Heart left ventricle (tissue), 16 donors: ENCODE measurements at regions of chr11 and their contacts with region 1.

Region 1: DNA sequence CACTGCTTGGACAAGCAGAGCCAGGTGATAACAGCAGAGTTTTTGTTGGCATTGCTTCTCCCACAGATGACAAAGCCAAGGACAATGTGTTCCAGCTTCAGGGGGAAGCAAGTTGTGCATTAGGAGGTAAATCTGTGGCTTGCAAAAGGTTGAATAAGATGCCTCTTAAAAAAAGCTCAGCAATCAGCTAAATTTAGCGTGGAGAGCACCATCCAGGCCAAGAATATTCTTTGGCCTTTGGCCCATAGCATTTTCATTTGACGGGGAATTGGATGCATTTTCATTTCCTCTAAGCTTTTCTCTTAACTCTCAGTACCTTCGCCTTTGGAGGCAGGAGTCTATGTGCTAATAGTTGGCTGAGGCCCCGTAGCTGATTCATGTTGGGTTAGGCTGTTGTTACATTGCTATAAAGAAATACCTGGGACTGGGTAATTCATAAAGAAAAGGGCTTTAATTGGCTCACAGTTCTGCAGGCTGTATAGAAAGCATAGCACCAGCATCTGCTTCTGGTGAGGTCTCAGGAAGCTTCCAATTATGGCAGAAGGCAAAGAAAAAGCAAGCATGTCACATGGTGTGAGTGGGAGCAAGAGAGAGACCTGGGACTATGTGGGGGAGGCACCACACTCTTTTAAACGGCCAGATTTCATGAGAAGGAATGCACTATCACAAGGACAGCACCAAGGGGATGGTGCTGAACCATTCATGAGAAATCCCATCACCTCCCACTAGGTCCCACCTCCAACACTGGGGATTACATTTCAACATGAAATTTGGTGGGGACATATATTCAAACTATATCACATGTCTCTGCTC is 350.1 kb upstream of the C11orf87 start:
- DNase-seq: peak in 4 of 5 donors; percentile 23 to 69 (median 31)
- ATAC-seq: peak; percentile 89 to 95 (median 92)
- H3K4me3 ChIP-seq: no peak overlapping the region
- H3K27ac ChIP-seq: peak overlapping the region in 10 of 12 donors; percentile 20 to 84 (median 51)
- H3K4me1 ChIP-seq: peaks cover 0 to 30% (median 12%) of the 10 kb centered on the region in 12 donors
- H3K27me3 ChIP-seq: no peaks in the 10 kb centered on the region
- CTCF ChIP-seq: no peak
- POLR2A ChIP-seq: no peak

Region 2: DNA sequence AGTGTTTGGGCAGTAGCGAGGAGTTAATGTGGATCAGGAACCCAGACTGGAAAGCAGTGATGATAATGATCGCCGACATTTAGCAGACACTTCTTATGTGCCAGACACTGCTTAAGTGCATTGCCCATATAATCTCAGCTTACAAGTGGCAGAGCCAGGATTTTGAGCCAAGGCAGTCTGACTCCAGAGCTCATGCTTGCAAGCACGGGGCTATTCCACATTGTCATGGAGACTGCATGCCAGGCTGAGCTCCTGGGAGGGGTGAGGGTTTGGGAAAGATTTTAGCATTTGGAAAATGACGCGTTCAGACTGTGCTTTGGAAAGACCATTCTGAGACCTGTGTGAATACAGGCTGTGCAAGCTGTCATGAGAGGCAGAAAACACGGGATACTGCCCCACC is 104.3 kb before region 1 on chr11:
- intact Hi-C with region 1: loop called in 1 of 10 experiments (anchors 5 kb)
- DNase-seq: peak in 4 of 5 donors; percentile 40 to 80 (median 72)
- ATAC-seq: peak; percentile 92 to 96 (median 95)
- H3K4me3 ChIP-seq: no peak overlapping the region
- H3K27ac ChIP-seq: peak overlapping the region in 11 of 12 donors; percentile 2 to 85 (median 60)
- H3K4me1 ChIP-seq: peaks cover 0 to 12% (median 2%) of the 10 kb centered on the region in 12 donors
- H3K27me3 ChIP-seq: no peaks in the 10 kb centered on the region
- CTCF ChIP-seq: no peak
- POLR2A ChIP-seq: no peak

Region 3: GRCh38 chr11:108975641-108976071 is 96.3 kb before region 1 on chr11:
- intact Hi-C with region 1: loop called in 3 of 10 experiments (anchors 1 to 10 kb)
- DNase-seq: peak in 4 of 5 donors; percentile 52 to 79 (median 67)
- ATAC-seq: peak; percentile 96 to 99 (median 97)
- H3K4me3 ChIP-seq: no peak overlapping the region
- H3K27ac ChIP-seq: peak overlapping the region in 7 of 12 donors; percentile 5 to 73 (median 46)
- H3K4me1 ChIP-seq: peaks cover 0 to 7% (median 0%) of the 10 kb centered on the region in 12 donors
- H3K27me3 ChIP-seq: no peaks in the 10 kb centered on the region
- CTCF ChIP-seq: no peak
- POLR2A ChIP-seq: no peak

Region 4: GRCh38 chr11:108985945-108986279 is 86.0 kb before region 1 on chr11:
- intact Hi-C with region 1: loop called in 1 of 10 experiments (anchors 10 kb)
- DNase-seq: no peak
- ATAC-seq: peak in 1 of 4 donors; percentile 76
- H3K4me3 ChIP-seq: no peak overlapping the region
- H3K27ac ChIP-seq: no peak overlapping the region
- H3K4me1 ChIP-seq: peaks cover 0 to 23% (median 9%) of the 10 kb centered on the region in 12 donors
- H3K27me3 ChIP-seq: no peaks in the 10 kb centered on the region
- CTCF ChIP-seq: no peak
- POLR2A ChIP-seq: no peak

Region 5: DNA sequence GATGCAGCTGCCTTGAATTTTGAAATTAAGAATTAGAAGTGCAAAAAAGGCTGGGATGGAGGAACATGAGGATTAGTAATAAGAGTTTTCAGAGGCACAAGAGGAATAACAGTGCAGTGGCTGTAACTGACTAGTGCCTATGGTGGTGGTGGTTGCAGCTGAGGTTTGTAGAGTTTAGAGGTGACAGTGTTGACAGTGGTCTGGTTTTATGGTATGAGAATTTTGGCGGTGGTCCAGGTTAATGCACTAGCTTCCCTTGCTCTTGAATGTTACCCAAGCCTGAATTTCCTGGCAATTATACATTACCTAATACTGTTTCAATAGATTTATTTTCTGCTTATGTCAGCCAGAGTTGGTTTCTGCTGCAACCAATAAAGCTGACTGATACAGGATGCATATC is 237.2 kb after region 1 on chr11:
- intact Hi-C with region 1: loop called in 1 of 10 experiments (anchors 10 kb)
- DNase-seq: no peak
- ATAC-seq: no peak
- H3K4me3 ChIP-seq: no peak overlapping the region
- H3K27ac ChIP-seq: no peak overlapping the region
- H3K4me1 ChIP-seq: no peaks in the 10 kb centered on the region
- H3K27me3 ChIP-seq: no peaks in the 10 kb centered on the region
- CTCF ChIP-seq: no peak
- POLR2A ChIP-seq: no peak